ENCODE measurements at regions of chr9 and their contacts with region 1.

Region 1: GRCh38 chr9:93064392-93065134 is 6.1 kb downstream of the SUSD3 start:
- DNase-seq: peak; percentile 91
- H3K4me3 Mint-ChIP-seq: peak overlapping the region; percentile 91
- H3K27ac Mint-ChIP-seq: peak overlapping the region; percentile 96
- H3K4me1 Mint-ChIP-seq: peaks cover 84% of the 10 kb centered on the region
- H3K27me3 Mint-ChIP-seq: no peaks in the 10 kb centered on the region

Region 2: GRCh38 chr9:92325269-92325990 is 739.1 kb before region 1 on chr9 and contains the starts of genes CENPP and NOL8:
- intact Hi-C with region 1: no loop called
- DNase-seq: peak; percentile 81
- H3K4me3 Mint-ChIP-seq: peak within 1 kb of the TSS; percentile 93
- H3K27ac Mint-ChIP-seq: peak within 1 kb of the TSS; percentile 96
- H3K4me1 Mint-ChIP-seq: peaks cover 32% of the 10 kb centered on the region
- H3K27me3 Mint-ChIP-seq: no peaks in the 10 kb centered on the region
- total RNA-seq, gene CENPP: 24.6 and 26.0 TPM in 2 replicates
- total RNA-seq, gene NOL8: 84.4 and 95.5 TPM in 2 replicates

Region 3: GRCh38 chr9:93003552-93004407 is 60.8 kb before region 1 on chr9:
- intact Hi-C with region 1: loop called (anchors 2 kb)
- DNase-seq: peak; percentile 51
- H3K4me3 Mint-ChIP-seq: no peak overlapping the region
- H3K27ac Mint-ChIP-seq: peak overlapping the region; percentile 63
- H3K4me1 Mint-ChIP-seq: peaks cover 38% of the 10 kb centered on the region
- H3K27me3 Mint-ChIP-seq: no peaks in the 10 kb centered on the region

Region 4: DNA sequence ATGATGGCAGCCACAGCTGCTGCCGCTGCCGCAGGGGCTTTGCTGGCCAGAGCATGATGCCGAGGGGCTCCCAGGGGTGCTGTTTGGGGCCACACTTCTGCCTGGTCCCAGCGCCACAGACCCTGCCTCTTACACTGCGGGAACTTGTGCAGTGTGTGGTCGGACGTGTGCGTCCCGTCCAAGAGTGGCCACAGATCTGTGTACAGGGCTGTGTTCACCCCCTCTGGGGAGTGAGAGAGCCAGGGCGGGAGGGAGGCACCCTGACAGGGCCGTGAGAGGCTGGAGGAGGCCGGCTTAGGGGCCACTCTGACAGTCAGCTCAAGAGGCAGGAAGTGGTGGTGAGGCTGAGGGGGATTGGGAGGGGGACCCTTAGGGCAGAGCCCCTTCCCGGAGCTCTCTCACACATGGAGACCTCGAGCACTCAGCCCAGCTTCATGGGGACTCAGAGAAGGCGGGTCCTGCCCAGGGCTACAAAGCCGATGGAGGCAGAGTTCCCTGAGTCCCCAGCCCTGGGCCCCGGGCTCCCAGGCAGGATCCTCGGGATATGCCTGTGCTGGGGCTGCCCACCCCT is 18.4 kb after region 1 on chr9:
- intact Hi-C with region 1: loop called (anchors 1 kb)
- DNase-seq: no peak
- H3K4me3 Mint-ChIP-seq: no peak overlapping the region
- H3K27ac Mint-ChIP-seq: peak overlapping the region; percentile 58
- H3K4me1 Mint-ChIP-seq: peaks cover 26% of the 10 kb centered on the region
- H3K27me3 Mint-ChIP-seq: no peaks in the 10 kb centered on the region

Region 5: DNA sequence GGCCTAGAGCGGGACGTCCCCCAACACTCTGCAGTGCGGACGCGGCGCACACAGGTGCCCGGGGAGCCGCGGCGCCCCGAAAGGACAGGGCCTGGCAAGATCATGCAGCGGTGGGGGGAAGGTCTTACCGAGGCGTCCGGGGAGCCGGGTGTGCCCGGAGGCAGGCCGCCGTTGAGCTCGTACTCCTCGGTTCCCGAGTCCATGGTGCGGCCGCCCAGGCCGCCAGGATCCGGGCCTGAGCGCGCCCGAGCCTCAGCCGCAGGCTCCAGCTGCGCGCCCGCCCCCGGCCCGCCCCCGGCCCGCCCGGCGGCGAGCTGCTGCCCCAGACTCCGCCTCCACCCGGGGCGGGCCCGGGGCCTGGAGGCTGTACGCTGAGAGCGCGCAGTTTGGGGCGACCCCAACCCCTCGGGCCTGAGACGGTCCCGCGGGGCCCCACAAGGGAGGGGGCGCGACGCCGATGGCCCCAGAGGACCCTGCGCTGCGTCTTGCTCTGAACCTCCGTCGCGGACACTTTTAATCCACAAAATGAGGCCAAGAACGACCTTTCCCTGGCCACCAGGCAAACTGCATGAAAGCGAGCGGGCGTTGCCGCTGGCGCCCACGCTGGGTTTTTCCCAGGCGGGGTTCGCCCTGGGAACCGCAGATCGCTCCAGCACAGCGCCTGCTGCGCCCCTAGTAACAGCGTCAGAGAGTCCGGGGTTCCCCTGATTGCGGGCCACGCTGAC is 69.6 kb after region 1 on chr9 and contains the start of gene NINJ1:
- intact Hi-C with region 1: loop called (anchors 1 kb)
- DNase-seq: peak; percentile 89
- H3K4me3 Mint-ChIP-seq: peak within 1 kb of the TSS; percentile 94
- H3K27ac Mint-ChIP-seq: peak within 1 kb of the TSS; percentile 96
- H3K4me1 Mint-ChIP-seq: peaks cover 57% of the 10 kb centered on the region
- H3K27me3 Mint-ChIP-seq: peaks cover 2% of the 10 kb centered on the region
- total RNA-seq, gene NINJ1: 94.2 and 95.3 TPM in 2 replicates

Region 6: DNA sequence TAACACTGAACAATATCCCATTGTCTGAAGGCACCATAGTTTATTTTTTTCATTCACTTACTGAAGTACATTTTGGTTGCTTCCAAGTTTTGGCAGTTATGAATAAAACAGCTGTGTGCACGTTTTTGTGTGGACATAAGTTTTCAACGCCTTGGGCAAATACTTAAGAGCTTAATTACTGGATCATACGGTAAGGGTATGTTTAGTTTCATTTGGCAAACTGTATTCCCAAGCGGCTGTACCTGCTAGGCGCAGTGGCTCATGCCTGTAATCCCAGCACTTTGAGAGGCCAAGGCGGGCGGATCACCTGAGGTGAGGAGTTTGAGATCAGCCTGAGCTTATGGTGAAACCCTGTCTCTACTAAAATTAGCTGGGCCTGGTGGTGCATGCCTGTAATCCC is 323.2 kb after region 1 on chr9:
- intact Hi-C with region 1: no loop called
- DNase-seq: no peak
- H3K4me3 Mint-ChIP-seq: no peak overlapping the region
- H3K27ac Mint-ChIP-seq: no peak overlapping the region
- H3K4me1 Mint-ChIP-seq: no peaks in the 10 kb centered on the region
- H3K27me3 Mint-ChIP-seq: peaks cover 12% of the 10 kb centered on the region